Endothelial cell of umbilical vein (primary cell): ENCODE measurements at regions of chr5 and their contacts with region 1.

Region 1: DNA sequence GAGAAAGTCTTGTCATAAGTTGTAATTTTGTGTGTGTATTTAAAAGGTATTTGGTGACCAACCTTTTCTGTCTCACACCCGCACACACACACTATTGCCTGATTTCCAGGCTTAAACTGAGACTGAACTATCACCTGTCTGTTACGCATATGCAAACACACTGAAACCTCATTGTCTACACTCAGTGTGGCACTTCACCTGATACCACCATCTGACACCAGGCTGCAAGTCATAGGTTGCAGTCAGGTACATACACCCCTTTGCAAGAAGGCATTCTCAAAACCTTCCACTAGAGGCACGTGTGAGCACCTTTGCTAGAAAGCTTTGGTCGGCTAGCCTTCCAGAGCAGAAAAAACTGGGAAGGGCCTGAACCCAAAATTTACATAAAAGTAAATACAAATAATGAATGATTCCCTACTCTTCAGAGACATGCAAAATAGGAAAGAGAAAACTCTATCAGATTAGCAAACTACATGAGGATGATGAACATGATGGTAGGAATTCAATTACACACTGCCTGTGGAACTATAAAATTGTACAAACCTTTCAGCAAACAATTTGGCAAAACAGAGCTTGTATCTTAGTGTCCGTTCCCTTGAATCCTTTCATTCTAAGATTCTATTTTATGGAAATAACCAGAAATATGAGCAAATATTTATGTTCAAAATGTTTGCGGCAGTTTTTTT is 5.9 kb upstream of the FOXD1 start:
- DNase-seq: peak; percentile 66
- H3K4me3 ChIP-seq: no peak overlapping the region
- H3K27ac ChIP-seq: no peak overlapping the region
- H3K4me1 ChIP-seq: no peaks in the 10 kb centered on the region
- H3K27me3 ChIP-seq: peaks cover 59 to 78% of the 10 kb centered on the region in 2 experiments
- CTCF ChIP-seq: peak; percentile 68 to 74
- POLR2A ChIP-seq: no peak

Region 2: GRCh38 chr5:73485715-73486114 is 31.2 kb after region 1 on chr5:
- CTCF ChIA-PET with region 1: interaction called, 13 read pairs
- POLR2A ChIA-PET with region 1: no interaction called
- dilution Hi-C with region 1: no loop called
- intact Hi-C with region 1: no loop called
- DNase-seq: no peak
- H3K4me3 ChIP-seq: no peak overlapping the region
- H3K27ac ChIP-seq: no peak overlapping the region
- H3K4me1 ChIP-seq: no peaks in the 10 kb centered on the region
- H3K27me3 ChIP-seq: peaks cover 39 to 52% of the 10 kb centered on the region in 2 experiments
- CTCF ChIP-seq: no peak
- POLR2A ChIP-seq: no peak

Region 3: DNA sequence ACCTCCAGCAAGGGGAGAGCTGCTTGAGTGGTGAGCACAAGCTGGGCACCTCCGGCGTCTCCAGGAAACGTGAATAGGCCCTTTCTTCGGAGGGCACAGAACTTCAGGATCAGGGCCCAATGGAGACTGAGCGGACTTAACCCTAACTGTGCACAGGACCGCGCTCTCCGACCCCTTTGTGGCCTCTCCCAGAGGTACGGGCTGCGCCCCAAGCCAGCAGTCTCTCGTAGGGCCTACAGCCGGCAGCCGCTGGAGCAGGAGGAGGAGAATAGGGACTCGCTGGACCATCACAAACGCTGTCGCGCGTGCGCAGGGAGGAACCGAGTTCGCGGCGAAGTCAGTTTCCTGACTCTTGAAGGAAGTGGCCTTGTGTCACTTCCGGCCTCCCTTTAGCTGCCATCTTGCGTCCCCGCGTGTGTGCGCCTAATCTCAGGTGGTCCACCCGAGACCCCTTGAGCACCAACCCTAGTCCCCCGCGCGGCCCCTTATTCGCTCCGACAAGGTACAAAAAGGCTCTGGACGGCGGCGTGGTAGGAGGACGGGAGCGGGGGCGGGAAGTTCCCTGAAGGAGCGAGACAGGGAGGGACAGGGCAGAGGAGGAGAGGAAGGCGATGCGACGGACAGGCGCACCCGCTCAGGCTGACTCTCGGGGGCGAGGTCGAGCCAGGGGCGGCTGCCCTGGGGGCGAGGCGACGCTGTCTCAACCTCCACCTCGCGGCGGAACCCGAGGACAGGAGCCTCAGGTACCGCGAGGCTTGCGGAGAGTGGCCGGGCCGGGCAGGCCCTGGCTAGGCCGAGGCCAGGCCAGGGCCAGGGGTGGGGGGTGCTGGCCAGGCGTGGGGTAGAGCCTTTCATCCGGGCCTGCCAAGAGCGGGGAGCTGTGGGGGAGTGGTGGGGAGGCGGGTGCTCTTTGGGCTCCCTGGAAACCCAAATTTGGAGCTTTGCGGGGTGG is 43.8 kb after region 1 on chr5 and contains the start of gene BTF3:
- CTCF ChIA-PET with region 1: interaction called, 21 read pairs
- POLR2A ChIA-PET with region 1: no interaction called
- dilution Hi-C with region 1: no loop called
- intact Hi-C with region 1: no loop called
- DNase-seq: peak; percentile 96
- H3K4me3 ChIP-seq: peak within 1 kb of the TSS; percentile 84 to 95 (median 91)
- H3K27ac ChIP-seq: peak within 1 kb of the TSS; percentile 92
- H3K4me1 ChIP-seq: peaks cover 32% of the 10 kb centered on the region
- H3K27me3 ChIP-seq: peaks cover 2 to 4% of the 10 kb centered on the region in 2 experiments
- CTCF ChIP-seq: no peak
- POLR2A ChIP-seq: peak; percentile 88
- total RNA-seq, gene BTF3: 632 and 637 TPM in 2 replicates

Region 4: GRCh38 chr5:73540192-73540591 is 85.7 kb after region 1 on chr5:
- CTCF ChIA-PET with region 1: interaction called, 17 read pairs
- POLR2A ChIA-PET with region 1: no interaction called
- dilution Hi-C with region 1: no loop called
- intact Hi-C with region 1: loop called (anchors 2 kb)
- DNase-seq: peak; percentile 38
- H3K4me3 ChIP-seq: no peak overlapping the region
- H3K27ac ChIP-seq: no peak overlapping the region
- H3K4me1 ChIP-seq: peaks cover 27% of the 10 kb centered on the region
- H3K27me3 ChIP-seq: no peaks in the 10 kb centered on the region
- CTCF ChIP-seq: no peak
- POLR2A ChIP-seq: no peak